GM12878 (cell line): ENCODE measurements at regions of chr22 and their contacts with region 1.

Region 1: GRCh38 chr22:35350539-35351503 is 30.1 kb upstream of the HMOX1 start:
- DNase-seq: peak; percentile 58
- ATAC-seq: peak; percentile 90
- H3K4me3 ChIP-seq: peak overlapping the region; percentile 77
- H3K27ac ChIP-seq: peak overlapping the region; percentile 18; the same call in 1 of the 2 replicates
- H3K4me1 ChIP-seq: peaks cover 34% of the 10 kb centered on the region
- H3K27me3 ChIP-seq: no peaks in the 10 kb centered on the region
- CTCF ChIP-seq: peak; percentile 80 to 97 (median 87)
- EP300 ChIP-seq: no peak
- POLR2A ChIP-seq: no peak
- RAD21 ChIP-seq: peak; percentile 94

Region 2: DNA sequence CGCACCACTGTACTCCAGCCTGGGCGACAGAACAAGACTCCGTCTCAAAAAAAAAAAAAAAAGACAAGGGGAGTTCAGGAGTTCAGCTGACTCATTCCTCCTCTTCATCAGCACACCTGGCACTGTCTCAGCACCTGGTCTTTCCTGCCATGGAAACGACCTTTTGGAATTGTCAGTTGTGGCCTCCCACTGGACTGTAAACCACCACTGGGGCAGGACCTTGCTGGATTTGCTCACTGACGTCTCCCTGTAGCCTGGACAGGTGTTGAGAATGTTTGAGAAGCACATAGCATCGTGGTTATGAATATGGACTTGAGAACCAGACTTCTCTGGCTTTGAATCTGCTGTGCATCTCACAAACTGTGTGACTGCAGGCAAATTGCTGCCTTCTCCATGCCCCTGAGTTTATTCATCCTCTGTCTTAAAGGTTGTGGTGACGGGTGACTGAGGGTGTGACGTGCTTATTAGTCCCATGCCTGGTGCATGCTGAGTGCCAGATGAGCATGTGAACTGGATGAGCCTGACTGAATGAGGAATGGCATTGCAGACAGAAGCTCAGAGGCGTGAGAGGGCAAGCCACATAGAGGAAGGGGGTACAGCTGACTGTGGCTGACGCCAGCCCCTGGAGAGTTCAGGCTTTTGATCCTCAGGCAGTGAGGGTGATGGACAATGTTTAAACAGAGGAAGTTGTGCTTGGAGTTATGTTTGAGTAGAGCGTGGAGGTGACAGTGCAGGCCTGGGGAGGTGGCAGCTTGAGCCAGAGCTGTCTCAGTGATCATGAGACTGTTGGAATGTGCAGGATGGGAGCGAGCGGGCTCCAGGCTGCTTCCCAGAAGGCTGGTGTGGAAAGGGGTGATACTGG is 38.4 kb before region 1 on chr22:
- CTCF ChIA-PET with region 1: interaction called, 4 read pairs
- POLR2A ChIA-PET with region 1: no interaction called
- RAD21 ChIA-PET with region 1: interaction called, 16 read pairs
- SMC1A ChIA-PET with region 1: interaction called, 9 read pairs
- in situ Hi-C with region 1: no loop called
- intact Hi-C with region 1: no loop called
- DNase-seq: no peak
- ATAC-seq: no peak
- H3K4me3 ChIP-seq: no peak overlapping the region
- H3K27ac ChIP-seq: peak overlapping the region; percentile 72
- H3K4me1 ChIP-seq: peaks cover 61% of the 10 kb centered on the region
- H3K27me3 ChIP-seq: no peaks in the 10 kb centered on the region
- CTCF ChIP-seq: no peak
- EP300 ChIP-seq: no peak
- POLR2A ChIP-seq: no peak
- RAD21 ChIP-seq: no peak

Region 3: GRCh38 chr22:35376728-35377472 is 26.1 kb after region 1 on chr22:
- CTCF ChIA-PET with region 1: interaction called, 23 read pairs
- POLR2A ChIA-PET with region 1: interaction called, 5 read pairs
- RAD21 ChIA-PET with region 1: interaction called, 23 read pairs
- SMC1A ChIA-PET with region 1: interaction called, 12 read pairs
- in situ Hi-C with region 1: no loop called
- intact Hi-C with region 1: no loop called
- DNase-seq: peak; percentile 87
- ATAC-seq: peak; percentile 74
- H3K4me3 ChIP-seq: no peak overlapping the region; the same call in 1 of the 2 replicates
- H3K27ac ChIP-seq: peak overlapping the region; percentile 81
- H3K4me1 ChIP-seq: peaks cover 37% of the 10 kb centered on the region
- H3K27me3 ChIP-seq: no peaks in the 10 kb centered on the region
- CTCF ChIP-seq: no peak
- EP300 ChIP-seq: peak; percentile 85 to 88
- POLR2A ChIP-seq: no peak
- RAD21 ChIP-seq: 0 out of 2 replicates have a peak, but pooled peaks have one; percentile 0

Region 4: GRCh38 chr22:35399678-35400334 is 49.0 kb after region 1 on chr22 and contains the start of gene MCM5:
- CTCF ChIA-PET with region 1: interaction called, 21 read pairs
- POLR2A ChIA-PET with region 1: interaction called, 4 read pairs
- RAD21 ChIA-PET with region 1: interaction called, 7 read pairs
- SMC1A ChIA-PET with region 1: interaction called, 7 read pairs
- in situ Hi-C with region 1: no loop called
- intact Hi-C with region 1: no loop called
- DNase-seq: peak; percentile 94
- ATAC-seq: peak; percentile 96
- H3K4me3 ChIP-seq: peak within 1 kb of the TSS; percentile 91
- H3K27ac ChIP-seq: peak within 1 kb of the TSS; percentile 90
- H3K4me1 ChIP-seq: peaks cover 32% of the 10 kb centered on the region
- H3K27me3 ChIP-seq: no peaks in the 10 kb centered on the region
- CTCF ChIP-seq: no peak
- EP300 ChIP-seq: no peak
- POLR2A ChIP-seq: peak; percentile 81
- RAD21 ChIP-seq: no peak
- polyA plus RNA-seq, gene MCM5: 14.1 to 22.1 TPM

Region 5: GRCh38 chr22:35430897-35431322 is 80.1 kb after region 1 on chr22:
- CTCF ChIA-PET with region 1: interaction called, 12 read pairs
- POLR2A ChIA-PET with region 1: no interaction called
- RAD21 ChIA-PET with region 1: interaction called, 7 read pairs
- SMC1A ChIA-PET with region 1: interaction called, 3 read pairs
- in situ Hi-C with region 1: no loop called
- intact Hi-C with region 1: no loop called
- DNase-seq: no peak
- ATAC-seq: peak; percentile 79
- H3K4me3 ChIP-seq: no peak overlapping the region
- H3K27ac ChIP-seq: no peak overlapping the region
- H3K4me1 ChIP-seq: no peaks in the 10 kb centered on the region
- H3K27me3 ChIP-seq: no peaks in the 10 kb centered on the region
- CTCF ChIP-seq: peak; percentile 60 to 73 (median 69)
- EP300 ChIP-seq: no peak
- POLR2A ChIP-seq: no peak
- RAD21 ChIP-seq: peak; percentile 55

Region 6: DNA sequence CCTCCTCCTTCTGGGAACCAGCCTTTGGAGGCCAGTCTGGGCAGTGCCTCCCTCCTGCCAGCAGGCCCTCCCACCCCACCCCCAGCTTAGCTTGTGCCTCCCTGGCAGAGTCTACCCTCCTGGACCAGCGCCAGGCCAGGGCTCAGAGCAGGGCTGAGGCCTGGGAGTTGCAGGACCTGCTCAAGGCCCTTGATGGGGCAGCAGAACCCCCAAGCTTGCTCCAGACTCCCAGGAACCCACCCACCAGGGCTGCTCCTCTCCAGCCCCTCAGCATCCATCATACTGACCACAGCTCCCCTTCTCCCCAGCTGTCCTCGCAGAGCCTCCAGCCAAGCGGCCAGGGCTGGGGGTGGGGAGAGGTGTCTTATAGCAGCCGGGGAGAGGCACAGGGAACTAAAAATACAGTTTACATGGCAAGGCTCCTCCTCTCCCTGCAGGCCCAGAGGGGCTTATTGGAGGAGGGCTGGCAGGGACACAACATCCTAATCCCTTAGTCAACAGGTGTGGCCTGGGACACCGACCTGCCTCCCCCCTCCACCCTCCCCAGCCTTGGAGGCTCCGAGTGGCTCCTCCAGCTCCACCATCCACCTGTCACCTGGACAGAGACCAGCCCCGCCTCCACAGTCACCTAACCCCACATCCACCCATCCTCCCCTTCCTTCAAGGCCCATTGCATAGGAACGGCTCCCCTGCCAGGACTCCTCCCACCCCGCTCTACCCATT is 271.5 kb after region 1 on chr22:
- CTCF ChIA-PET with region 1: interaction called, 12 read pairs
- POLR2A ChIA-PET with region 1: interaction called, 3 read pairs
- RAD21 ChIA-PET with region 1: interaction called, 11 read pairs
- SMC1A ChIA-PET with region 1: interaction called, 4 read pairs
- in situ Hi-C with region 1: loop called (anchors 5 kb)
- intact Hi-C with region 1: loop called (anchors 1 kb)
- DNase-seq: no peak
- ATAC-seq: no peak
- H3K4me3 ChIP-seq: no peak overlapping the region
- H3K27ac ChIP-seq: no peak overlapping the region
- H3K4me1 ChIP-seq: 0 out of 2 replicates have a peak, but pooled peaks cover under 1% of the 10 kb centered on the region
- H3K27me3 ChIP-seq: peaks cover 0 to 1% of the 10 kb centered on the region in 2 experiments; a peak in 1 of 4 replicates
- CTCF ChIP-seq: no peak
- EP300 ChIP-seq: no peak
- POLR2A ChIP-seq: no peak
- RAD21 ChIP-seq: no peak

Region 7: DNA sequence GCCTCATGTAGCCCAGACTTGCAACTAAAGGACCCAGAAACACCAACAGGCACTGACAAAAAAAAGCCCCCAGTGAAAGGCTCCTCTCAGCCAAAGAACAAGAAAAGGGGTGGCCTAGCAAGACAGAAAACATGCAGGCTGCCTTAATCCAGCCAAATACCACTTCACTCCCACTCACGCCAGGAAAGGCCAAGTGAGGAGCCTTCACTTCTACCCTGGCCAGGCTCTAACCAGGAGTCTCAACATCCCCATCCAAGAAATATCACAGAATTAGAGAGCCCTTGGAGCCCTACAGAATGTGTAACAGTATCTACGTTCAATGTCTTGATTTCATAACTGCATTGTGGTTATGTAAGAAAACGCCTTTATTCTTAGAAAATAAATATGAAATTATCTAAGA is 515.8 kb after region 1 on chr22:
- CTCF ChIA-PET with region 1: no interaction called
- POLR2A ChIA-PET with region 1: no interaction called
- RAD21 ChIA-PET with region 1: no interaction called
- SMC1A ChIA-PET with region 1: no interaction called
- in situ Hi-C with region 1: no loop called
- intact Hi-C with region 1: no loop called
- DNase-seq: no peak
- ATAC-seq: no peak
- H3K4me3 ChIP-seq: no peak overlapping the region
- H3K27ac ChIP-seq: no peak overlapping the region
- H3K4me1 ChIP-seq: no peaks in the 10 kb centered on the region
- H3K27me3 ChIP-seq: peaks cover 0 to 6% of the 10 kb centered on the region in 2 experiments; a peak in 1 of 4 replicates
- CTCF ChIP-seq: no peak
- EP300 ChIP-seq: no peak
- POLR2A ChIP-seq: no peak
- RAD21 ChIP-seq: no peak

Region 8: DNA sequence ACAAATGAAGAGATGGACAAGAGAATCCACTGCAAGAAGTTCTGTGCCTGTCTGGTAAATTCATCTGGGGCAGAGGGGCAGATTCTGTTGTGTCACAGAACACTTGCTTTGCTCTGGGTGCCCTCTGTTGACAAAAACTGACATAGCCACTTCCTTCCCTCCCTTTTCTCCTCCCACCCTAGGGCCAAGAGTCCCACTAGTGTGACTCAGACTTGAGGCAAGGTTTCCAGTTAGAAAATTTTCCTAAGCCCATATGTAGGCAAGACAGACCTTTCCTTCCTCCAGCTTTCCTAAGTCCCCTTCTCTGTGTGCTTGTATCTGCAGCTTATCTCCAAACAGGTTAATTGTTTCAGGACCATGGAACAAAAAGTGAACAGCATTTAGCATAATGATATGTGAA is 571.0 kb after region 1 on chr22:
- CTCF ChIA-PET with region 1: no interaction called
- POLR2A ChIA-PET with region 1: no interaction called
- RAD21 ChIA-PET with region 1: no interaction called
- SMC1A ChIA-PET with region 1: no interaction called
- in situ Hi-C with region 1: loop called (anchors 10 kb)
- intact Hi-C with region 1: loop called (anchors 5 kb)
- DNase-seq: peak; percentile 13
- ATAC-seq: peak; percentile 87
- H3K4me3 ChIP-seq: no peak overlapping the region
- H3K27ac ChIP-seq: no peak overlapping the region
- H3K4me1 ChIP-seq: no peaks in the 10 kb centered on the region
- H3K27me3 ChIP-seq: no peaks in the 10 kb centered on the region
- CTCF ChIP-seq: peak; percentile 46 to 75 (median 60); a peak in 5 of 6 replicates
- EP300 ChIP-seq: no peak
- POLR2A ChIP-seq: no peak
- RAD21 ChIP-seq: peak; percentile 77